ENCODE measurements at regions of chr6 and their contacts with region 1.

Region 1: DNA sequence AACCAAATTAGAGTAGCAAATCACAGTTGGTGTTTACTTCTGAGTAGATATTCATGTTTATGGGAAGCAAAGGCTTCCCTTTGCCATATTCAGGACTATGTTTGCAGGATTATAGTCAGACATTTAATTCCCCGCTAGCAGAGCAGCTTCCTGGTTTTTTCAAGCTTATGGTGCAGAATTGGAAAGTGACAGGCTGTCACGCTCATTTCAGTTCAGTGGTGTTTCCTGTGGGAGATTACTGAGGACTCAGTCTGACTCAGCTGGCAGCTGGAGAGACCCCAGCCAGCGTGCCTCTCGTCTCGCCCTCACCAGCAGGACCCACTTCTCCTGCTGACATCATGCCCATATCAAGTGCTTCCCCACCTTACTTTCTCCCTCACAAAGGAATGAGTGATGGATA is 85.1 kb downstream of the LYRM2 start:
- DNase-seq: no peak
- H3K4me3 ChIP-seq: no peak overlapping the region
- H3K27ac ChIP-seq: no peak overlapping the region
- H3K4me1 ChIP-seq: no peaks in the 10 kb centered on the region
- H3K27me3 ChIP-seq: no peaks in the 10 kb centered on the region
- CTCF ChIP-seq: no peak

Region 2: DNA sequence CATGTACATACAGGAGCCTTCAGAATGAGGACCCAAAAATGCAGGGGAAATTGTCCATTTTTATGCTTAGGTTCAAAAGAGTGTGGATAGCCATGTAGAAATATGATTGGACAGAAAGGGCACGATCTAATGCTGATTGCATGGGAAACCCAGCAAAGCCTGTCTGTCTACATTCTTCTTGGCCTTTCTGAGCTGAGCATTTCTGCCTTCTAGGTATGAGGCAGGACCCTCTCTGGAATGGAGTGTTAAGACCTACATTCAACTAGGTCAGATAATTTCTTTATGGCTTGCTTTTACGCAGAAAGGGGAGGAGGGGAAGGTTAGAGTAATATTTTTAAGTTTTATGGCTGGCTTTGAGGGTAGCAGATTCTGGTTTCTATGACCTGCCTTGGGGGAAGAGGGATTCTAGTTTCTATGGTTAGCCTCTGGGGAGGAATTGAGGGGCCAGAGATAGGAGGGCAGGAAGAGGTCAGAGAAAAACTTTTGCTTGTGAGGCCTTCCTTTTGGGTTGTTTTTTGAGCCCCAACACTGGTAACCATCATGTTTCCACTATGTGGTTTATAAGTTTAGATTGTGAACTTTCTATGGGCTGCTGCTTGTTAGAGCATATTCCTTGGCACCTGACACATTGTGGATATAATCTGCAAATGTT is 21.6 kb after region 1 on chr6:
- CTCF ChIA-PET with region 1: no interaction called
- dilution Hi-C with region 1: no loop called
- in situ Hi-C with region 1: no loop called
- intact Hi-C with region 1: no loop called
- DNase-seq: no peak
- H3K4me3 ChIP-seq: no peak overlapping the region
- H3K27ac ChIP-seq: no peak overlapping the region
- H3K4me1 ChIP-seq: no peaks in the 10 kb centered on the region
- H3K27me3 ChIP-seq: no peaks in the 10 kb centered on the region
- CTCF ChIP-seq: no peak

Region 3: DNA sequence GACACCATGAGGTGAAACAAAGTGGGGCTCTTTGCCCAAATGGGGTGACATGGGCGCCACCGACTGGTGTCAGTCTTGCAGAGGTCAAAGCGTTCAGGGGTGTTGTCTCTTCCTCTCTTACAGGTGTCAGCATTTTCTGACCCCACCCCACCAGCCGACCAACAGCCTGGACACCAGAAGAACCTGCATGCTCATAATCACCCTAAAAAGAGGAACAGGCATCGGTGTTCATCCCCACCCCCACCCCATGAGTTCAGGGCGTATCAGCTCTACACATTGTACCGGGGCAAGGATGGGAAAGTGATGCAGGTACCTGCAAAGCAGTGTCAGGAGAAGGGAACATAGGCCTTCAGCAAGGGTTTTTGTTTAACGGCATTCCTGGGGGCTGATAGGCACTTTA is 70.3 kb after region 1 on chr6:
- CTCF ChIA-PET with region 1: no interaction called
- dilution Hi-C with region 1: loop called (anchors 5 kb)
- in situ Hi-C with region 1: no loop called
- intact Hi-C with region 1: no loop called
- DNase-seq: no peak
- H3K4me3 ChIP-seq: no peak overlapping the region
- H3K27ac ChIP-seq: no peak overlapping the region
- H3K4me1 ChIP-seq: no peaks in the 10 kb centered on the region
- H3K27me3 ChIP-seq: no peaks in the 10 kb centered on the region
- CTCF ChIP-seq: no peak

Measured in mammary epithelial cell (primary cell).